SK-N-SH (cell line): ENCODE measurements at regions of chr15 and their contacts with region 1.

Region 1: GRCh38 chr15:82971218-82971984 is 14.6 kb upstream of the RAMAC start:
- DNase-seq: no peak
- H3K4me3 ChIP-seq: no peak overlapping the region
- H3K27ac ChIP-seq: peak overlapping the region in 1 of 2 experiments; percentile 71; a peak in 2 of 4 replicates
- H3K4me1 ChIP-seq: peaks cover 0 to 13% of the 10 kb centered on the region in 2 experiments; a peak in 2 of 4 replicates
- H3K27me3 ChIP-seq: no peaks in the 10 kb centered on the region
- CTCF ChIP-seq: no peak
- EP300 ChIP-seq: no peak
- RAD21 ChIP-seq: no peak

Region 2: DNA sequence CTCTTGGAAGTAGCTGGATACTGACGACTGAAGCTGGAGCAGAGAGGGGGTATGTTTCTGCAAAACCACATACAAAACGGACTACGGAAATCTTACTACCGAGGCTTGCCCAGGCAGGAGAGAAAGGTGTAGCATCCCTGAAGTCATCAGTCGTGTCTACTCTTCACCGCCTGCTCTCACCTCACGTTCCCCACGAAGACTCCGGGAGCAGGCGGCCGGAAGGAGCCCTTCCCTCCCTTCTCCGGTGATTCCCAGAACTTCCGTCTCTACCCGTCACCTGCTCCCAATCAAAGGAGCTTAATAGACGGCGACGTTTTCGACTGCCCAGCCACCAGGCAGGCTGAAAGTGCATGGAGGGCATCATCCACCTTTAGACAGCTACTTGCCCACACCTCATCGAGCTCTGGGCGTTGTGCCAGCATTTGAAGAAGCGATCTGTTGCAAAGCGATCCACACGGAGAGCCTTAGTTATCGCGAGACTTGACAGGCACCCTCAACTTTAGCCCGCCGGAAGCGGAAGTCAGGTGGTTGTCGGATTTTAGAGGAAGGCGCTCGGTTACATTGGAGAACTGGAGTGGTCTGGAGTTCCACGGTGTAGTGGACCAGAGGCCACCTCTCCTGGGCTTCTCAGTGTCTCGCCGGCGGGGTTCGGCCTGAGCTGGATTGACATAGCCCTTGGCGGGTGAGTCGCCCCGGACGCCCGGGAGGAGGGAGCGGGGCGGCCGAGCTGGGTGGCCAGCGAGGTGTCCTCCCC is 14.5 kb after region 1 on chr15 and contains the start of gene RAMAC:
- CTCF ChIA-PET with region 1: interaction called, 6 read pairs
- POLR2A ChIA-PET with region 1: interaction called, 16 read pairs
- DNase-seq: peak; percentile 87
- H3K4me3 ChIP-seq: peak within 1 kb of the TSS; percentile 88 to 92
- H3K27ac ChIP-seq: peak within 1 kb of the TSS; percentile 69 to 94
- H3K4me1 ChIP-seq: peaks cover 8 to 10% of the 10 kb centered on the region in 2 experiments; a peak in 3 of 4 replicates
- H3K27me3 ChIP-seq: no peaks in the 10 kb centered on the region
- CTCF ChIP-seq: no peak
- EP300 ChIP-seq: 0 out of 4 replicates have a peak, but pooled peaks of 1 of the 2 experiments have one; percentile 22
- RAD21 ChIP-seq: 0 out of 2 replicates have a peak, but pooled peaks have one; percentile 4
- polyA plus RNA-seq, gene RAMAC: 25.9 and 33.3 TPM in 2 replicates

Region 3: GRCh38 chr15:83066734-83067637 is 95.6 kb after region 1 on chr15 and contains the start of gene BTBD1:
- CTCF ChIA-PET with region 1: no interaction called
- POLR2A ChIA-PET with region 1: no interaction called
- DNase-seq: peak; percentile 96
- H3K4me3 ChIP-seq: peak within 1 kb of the TSS; percentile 86 to 94
- H3K27ac ChIP-seq: peak within 1 kb of the TSS; percentile 91 to 94
- H3K4me1 ChIP-seq: peaks cover 24 to 26% of the 10 kb centered on the region in 2 experiments; a peak in 3 of 4 replicates
- H3K27me3 ChIP-seq: no peaks in the 10 kb centered on the region
- CTCF ChIP-seq: peak; percentile 6; the same call in 1 of the 2 replicates
- EP300 ChIP-seq: no peak
- RAD21 ChIP-seq: no peak
- polyA plus RNA-seq, gene BTBD1: 34.4 and 42.5 TPM in 2 replicates